RWPE1 (cell line): ENCODE measurements at regions of chr10 and their contacts with region 1.

Region 1: GRCh38 chr10:17430647-17431355 is 23.6 kb downstream of the ST8SIA6 start:
- DNase-seq: peak; percentile 56
- H3K27ac ChIP-seq: no peak overlapping the region
- CTCF ChIP-seq: peak; percentile 94

Region 2: DNA sequence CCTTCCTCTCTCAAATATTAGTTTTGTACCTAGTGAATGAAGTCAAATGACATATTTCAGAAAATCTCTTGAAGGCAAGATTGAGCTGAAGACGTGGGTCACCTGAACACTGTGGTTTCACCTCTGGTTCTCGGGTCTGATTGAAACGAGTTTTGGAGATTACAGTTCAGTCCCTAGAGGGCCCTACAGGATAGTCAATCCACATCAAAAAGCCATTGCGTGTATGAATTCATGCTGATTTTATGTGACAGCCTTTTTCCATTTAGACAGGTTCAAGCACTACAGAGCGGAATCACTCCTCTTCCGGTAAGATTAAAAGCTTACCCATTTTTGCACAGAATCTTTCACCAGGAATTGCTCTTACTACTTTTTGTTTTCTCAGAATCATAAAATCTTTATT is 140.6 kb before region 1 on chr10:
- CTCF ChIA-PET with region 1: interaction called, 10 read pairs
- POLR2A ChIA-PET with region 1: no interaction called
- DNase-seq: peak; percentile 62
- H3K27ac ChIP-seq: no peak overlapping the region
- CTCF ChIP-seq: peak; percentile 32; the same call in 1 of the 2 replicates